Right ventricle myocardium inferior (tissue), 1 donor: ENCODE measurements at regions of chr11 and their contacts with region 1.

Region 1: GRCh38 chr11:60775420-60775961 is 9.6 kb upstream of the MS4A10 start:
- DNase-seq: peak; percentile 78
- ATAC-seq: peak; percentile 77

Region 2: GRCh38 chr11:60825571-60826189 is 50.2 kb after region 1 on chr11:
- intact Hi-C with region 1: loop called (anchors 5 kb)
- DNase-seq: no peak
- ATAC-seq: no peak

Region 3: DNA sequence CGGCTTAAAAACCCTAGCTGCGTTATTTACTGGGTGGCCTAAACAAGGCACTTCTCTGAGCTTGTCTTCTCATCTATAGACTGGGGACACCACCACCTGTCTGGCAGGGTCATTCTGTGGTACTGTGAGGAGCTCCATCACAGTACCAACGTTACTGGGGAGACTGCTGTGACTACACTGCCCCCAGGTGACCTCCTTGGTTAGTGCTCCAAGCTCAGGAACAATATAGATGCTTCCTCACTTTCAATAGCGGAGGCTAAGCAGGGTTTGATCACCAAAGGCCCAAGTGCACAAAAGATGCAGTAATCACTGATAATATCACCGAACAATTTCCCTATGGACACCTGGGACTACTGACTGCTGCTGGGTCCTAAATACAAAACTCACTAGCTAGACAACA is 112.1 kb after region 1 on chr11:
- intact Hi-C with region 1: no loop called
- DNase-seq: no peak
- ATAC-seq: peak; percentile 77

Region 4: DNA sequence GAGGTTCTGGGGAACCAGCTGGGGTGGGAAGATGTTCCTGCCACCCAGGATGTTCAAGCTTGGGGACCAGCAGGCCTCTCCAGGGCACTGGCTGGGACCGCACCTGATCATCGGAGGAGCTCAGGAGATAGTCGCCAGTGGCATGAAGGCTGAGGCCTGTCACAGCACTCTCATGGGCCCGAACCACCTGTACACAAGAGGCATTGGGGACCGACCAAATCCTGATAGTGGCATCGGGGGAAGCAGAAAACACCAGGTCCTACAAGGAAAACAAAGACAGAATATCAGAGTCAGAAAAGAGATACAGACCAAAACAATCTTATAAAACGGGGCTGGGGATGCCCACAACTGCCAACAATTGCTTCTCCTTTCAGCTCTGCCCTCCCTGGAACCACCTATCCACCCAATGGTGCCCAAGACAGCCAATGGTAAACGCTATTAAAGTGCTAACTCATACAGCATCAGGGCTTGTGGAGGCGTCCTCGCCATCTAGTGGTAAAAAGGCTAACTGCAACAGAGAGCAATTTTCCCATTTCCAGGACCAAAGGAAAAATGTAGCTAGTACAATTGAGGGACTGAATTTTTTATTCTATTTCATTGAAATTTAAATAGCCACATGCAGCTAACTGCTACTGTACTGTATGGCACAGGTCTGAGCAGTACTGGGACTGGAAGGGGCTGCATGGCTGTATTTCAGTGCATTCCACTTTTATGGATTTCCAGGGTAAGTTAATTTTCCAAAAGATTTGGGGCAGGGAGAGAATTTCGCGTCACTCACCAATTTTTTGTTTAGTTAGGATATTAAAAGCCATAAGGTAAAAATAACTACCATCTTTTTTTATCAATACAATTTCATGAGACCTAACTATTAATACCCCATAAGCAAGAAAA is 123.8 kb after region 1 on chr11:
- intact Hi-C with region 1: loop called (anchors 2 kb)
- DNase-seq: no peak
- ATAC-seq: peak; percentile 66